PC-9 (cell line): ENCODE measurements at regions of chrX and their contacts with region 1.

Region 1: DNA sequence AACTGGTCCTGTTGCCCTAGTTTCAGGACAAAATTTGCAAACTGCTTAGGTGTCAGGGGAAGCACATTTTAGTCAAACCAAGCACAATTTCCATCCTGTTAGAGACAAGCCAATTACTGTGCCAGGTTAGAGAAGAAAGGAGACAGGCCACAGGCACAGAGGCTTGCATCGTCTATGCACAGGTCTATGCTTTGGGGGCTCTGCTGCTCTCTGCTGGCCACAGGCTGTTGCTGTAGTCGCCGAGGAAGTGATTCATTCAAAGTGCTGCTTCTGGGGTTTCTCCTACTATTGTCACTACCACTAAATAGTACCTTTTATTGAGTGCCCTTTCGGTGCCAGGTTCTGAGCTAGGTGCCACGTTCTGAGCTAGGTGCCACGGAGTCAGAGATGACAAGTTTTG is 45.5 kb downstream of the VGLL1 start:
- DNase-seq: peak in 1 of 2 experiments; percentile 68
- H3K4me3 ChIP-seq: no peak overlapping the region
- H3K27ac ChIP-seq: no peak overlapping the region
- H3K4me1 ChIP-seq: peaks cover 15% of the 10 kb centered on the region
- H3K27me3 ChIP-seq: no peaks in the 10 kb centered on the region
- CTCF ChIP-seq: peak; percentile 74

Region 2: DNA sequence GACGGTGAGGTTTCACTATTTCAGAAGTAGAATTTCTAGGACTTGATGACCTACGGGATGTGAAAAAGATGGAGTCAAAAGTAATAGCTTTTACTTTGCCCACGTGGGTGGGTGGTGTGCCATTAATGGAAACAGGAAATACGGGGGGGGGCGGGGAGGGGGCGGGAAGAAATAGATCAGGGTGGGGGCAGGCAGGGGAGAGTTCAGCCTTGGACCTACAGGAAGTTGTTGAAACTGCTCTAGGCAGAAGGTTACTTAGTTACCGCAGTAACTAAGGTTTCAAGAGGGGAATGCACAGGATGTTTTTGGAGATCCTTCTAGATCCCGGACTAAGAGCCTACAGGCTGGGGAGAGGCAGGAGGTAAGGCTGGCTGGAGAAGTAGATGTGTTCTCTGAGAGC is 433.8 kb before region 1 on chrX:
- CTCF ChIA-PET with region 1: no interaction called
- POLR2A ChIA-PET with region 1: interaction called, 32 read pairs
- intact Hi-C with region 1: no loop called
- DNase-seq: no peak
- H3K4me3 ChIP-seq: no peak overlapping the region
- H3K27ac ChIP-seq: no peak overlapping the region
- H3K4me1 ChIP-seq: no peaks in the 10 kb centered on the region
- H3K27me3 ChIP-seq: no peaks in the 10 kb centered on the region
- CTCF ChIP-seq: no peak

Region 3: GRCh38 chrX:136168929-136169735 is 408.4 kb before region 1 on chrX:
- CTCF ChIA-PET with region 1: interaction called, 3 read pairs
- POLR2A ChIA-PET with region 1: no interaction called
- intact Hi-C with region 1: loop called (anchors 1 kb)
- DNase-seq: peak; percentile 33 to 94
- H3K4me3 ChIP-seq: no peak overlapping the region
- H3K27ac ChIP-seq: no peak overlapping the region
- H3K4me1 ChIP-seq: peaks cover 42% of the 10 kb centered on the region
- H3K27me3 ChIP-seq: no peaks in the 10 kb centered on the region
- CTCF ChIP-seq: no peak

Region 4: DNA sequence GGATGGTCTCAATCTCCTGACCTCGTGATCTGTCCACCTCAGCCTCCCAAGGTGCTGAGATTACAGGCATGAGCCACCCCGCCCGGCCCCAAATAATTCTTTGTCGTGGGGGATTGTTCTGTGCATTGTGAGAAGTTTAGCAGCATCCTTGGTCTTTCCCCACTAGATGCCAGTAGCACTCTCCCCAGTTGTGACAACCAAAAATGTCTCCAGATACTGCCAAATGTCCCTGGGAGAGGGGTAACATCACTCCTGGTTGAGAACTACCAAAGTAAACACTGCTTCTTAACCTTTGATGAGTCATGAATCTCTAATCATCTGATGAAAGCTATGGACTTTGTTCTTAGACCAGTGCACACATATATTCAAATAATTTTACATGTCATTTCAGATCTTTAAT is 180.6 kb before region 1 on chrX:
- CTCF ChIA-PET with region 1: no interaction called
- POLR2A ChIA-PET with region 1: no interaction called
- intact Hi-C with region 1: loop called (anchors 1 kb)
- DNase-seq: peak; percentile 14 to 86
- H3K4me3 ChIP-seq: no peak overlapping the region
- H3K27ac ChIP-seq: peak overlapping the region; percentile 32
- H3K4me1 ChIP-seq: peaks cover 33% of the 10 kb centered on the region
- H3K27me3 ChIP-seq: no peaks in the 10 kb centered on the region
- CTCF ChIP-seq: peak; percentile 53

Region 5: GRCh38 chrX:136920001-136920400 is 342.4 kb after region 1 on chrX:
- CTCF ChIA-PET with region 1: no interaction called
- POLR2A ChIA-PET with region 1: no interaction called
- intact Hi-C with region 1: loop called (anchors 10 kb)
- DNase-seq: no peak
- H3K4me3 ChIP-seq: no peak overlapping the region
- H3K27ac ChIP-seq: no peak overlapping the region
- H3K4me1 ChIP-seq: no peaks in the 10 kb centered on the region
- H3K27me3 ChIP-seq: no peaks in the 10 kb centered on the region
- CTCF ChIP-seq: no peak